Heart left ventricle (tissue), 16 donors: ENCODE measurements at regions of chr18 and their contacts with region 1.

Region 1: DNA sequence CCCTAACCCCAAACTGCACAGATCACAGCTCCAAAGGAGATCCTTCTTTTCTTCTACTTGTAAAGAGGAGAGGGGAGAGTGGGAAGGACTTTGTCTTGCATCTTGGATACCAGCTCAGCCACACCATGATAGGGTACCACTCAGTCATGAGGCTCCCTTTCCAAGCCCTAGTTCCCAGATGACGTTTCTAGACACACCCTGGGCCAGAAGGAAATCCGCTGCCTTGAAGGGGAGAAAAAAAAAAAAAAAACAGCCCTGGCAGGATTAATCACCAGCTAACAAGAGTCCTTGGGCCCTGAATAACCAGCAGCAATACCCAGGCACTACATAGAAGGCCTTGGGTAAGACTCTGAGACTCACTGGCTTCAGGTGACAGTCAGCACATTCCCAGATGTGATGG is 36.9 kb downstream of the ST8SIA3 start:
- DNase-seq: no peak
- ATAC-seq: no peak
- H3K4me3 ChIP-seq: no peak overlapping the region
- H3K27ac ChIP-seq: no peak overlapping the region
- H3K4me1 ChIP-seq: no peaks in the 10 kb centered on the region
- H3K27me3 ChIP-seq: no peaks in the 10 kb centered on the region
- CTCF ChIP-seq: no peak
- POLR2A ChIP-seq: no peak

Region 2: GRCh38 chr18:57164401-57164800 is 224.9 kb before region 1 on chr18:
- intact Hi-C with region 1: loop called in 1 of 10 experiments (anchors 5 kb)
- DNase-seq: no peak
- ATAC-seq: no peak
- H3K4me3 ChIP-seq: no peak overlapping the region
- H3K27ac ChIP-seq: no peak overlapping the region
- H3K4me1 ChIP-seq: no peaks in the 10 kb centered on the region
- H3K27me3 ChIP-seq: peaks cover 0 to 4% (median 0%) of the 10 kb centered on the region in 9 donors
- CTCF ChIP-seq: no peak
- POLR2A ChIP-seq: no peak

Region 3: GRCh38 chr18:57249179-57249578 is 140.1 kb before region 1 on chr18:
- intact Hi-C with region 1: no loop called
- DNase-seq: no peak
- ATAC-seq: no peak
- H3K4me3 ChIP-seq: no peak overlapping the region
- H3K27ac ChIP-seq: no peak overlapping the region
- H3K4me1 ChIP-seq: no peaks in the 10 kb centered on the region
- H3K27me3 ChIP-seq: peaks cover 0 to 4% (median 0%) of the 10 kb centered on the region in 9 donors
- CTCF ChIP-seq: no peak
- POLR2A ChIP-seq: no peak

Region 4: DNA sequence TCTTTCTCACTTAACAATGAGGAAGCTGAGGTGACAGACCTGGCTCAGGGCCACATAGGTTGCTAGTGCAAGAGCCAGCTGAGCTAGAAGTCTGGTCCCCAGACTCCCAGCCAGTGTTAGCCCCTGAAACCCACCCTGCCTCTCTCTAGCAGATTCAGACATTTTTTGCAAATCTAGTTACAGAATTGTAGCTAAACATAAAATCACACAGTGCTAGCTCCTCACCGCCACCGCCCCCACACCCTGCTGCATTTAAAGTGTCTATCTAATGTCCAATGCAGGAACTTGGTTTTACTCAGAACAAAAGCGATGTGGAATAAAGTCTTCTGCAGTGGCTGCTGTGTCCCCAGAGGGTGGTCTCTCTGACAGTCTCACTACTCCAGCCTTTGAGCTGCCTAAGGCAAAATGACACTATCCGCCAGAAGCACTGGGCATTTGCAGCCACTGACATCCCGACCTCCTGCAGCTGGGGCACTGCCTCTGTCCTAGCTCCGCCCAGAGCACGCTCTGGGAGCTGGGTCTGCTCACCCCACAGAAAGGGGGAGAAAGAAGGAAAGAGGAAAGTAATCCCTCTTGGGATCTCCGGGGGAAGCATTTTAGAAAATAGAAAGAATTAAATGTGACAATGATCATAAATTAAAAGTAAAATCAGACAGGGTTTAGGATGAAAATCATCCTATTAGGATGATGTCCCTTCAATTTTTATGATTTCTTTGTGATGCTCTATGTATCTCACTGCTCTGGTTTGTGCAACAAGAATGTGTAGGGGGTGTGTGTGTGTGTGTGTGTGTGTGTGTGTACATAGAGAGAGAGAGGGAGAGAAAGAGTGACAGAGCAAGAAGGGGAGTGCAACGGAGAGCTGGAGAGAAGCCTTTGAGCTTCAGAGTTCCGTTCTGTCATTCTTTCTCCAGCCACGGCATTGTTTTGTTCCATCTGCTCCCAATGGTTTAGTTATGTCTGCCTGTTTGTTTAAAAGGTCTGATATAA is 87.4 kb before region 1 on chr18:
- intact Hi-C with region 1: loop called in 1 of 10 experiments (anchors 5 kb)
- DNase-seq: no peak
- ATAC-seq: no peak
- H3K4me3 ChIP-seq: no peak overlapping the region
- H3K27ac ChIP-seq: no peak overlapping the region
- H3K4me1 ChIP-seq: no peaks in the 10 kb centered on the region
- H3K27me3 ChIP-seq: peaks cover 0 to 23% (median 0%) of the 10 kb centered on the region in 9 donors
- CTCF ChIP-seq: no peak
- POLR2A ChIP-seq: no peak